PC-9 (cell line): ENCODE measurements at regions of chr1 and their contacts with region 1.

Region 1: DNA sequence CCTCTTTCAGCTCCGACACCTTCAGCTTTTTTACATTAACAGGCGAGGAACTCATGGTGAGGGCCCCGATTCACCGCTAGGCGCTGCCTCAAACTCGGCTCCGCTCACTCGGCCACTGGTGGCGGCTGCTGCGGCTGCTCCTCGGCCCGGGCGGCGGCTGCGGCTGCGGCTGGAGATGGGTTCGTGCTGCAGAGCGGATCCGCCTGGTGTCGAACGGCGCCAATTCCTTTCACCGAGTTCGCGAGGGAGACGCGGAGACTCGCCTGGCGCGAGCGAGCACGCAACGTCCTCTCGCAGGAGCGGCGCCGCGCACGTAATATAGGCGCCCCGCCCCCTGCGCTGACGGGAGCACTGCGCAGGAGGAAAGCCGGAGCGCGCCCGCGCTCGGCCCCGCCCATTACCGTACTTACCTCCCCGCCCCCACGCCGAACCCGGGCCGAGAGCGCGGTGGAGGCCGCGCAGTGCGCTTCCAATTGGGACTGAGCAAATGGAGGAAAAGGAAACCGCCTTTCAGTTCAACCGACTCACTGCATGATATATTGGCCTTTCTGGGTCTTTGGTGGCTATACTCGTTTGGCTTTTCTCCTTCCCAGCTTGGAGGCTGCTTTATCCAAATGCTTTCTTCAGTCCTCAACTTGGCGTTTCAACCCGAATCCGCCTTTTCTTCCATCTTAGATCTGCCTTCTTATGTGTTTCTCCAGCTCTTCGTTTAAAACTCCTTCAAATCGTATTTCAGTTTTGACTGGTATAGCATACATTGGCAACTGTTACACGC is at the start of gene HNRNPU:
- DNase-seq: peak; percentile 84 to 97
- H3K4me3 ChIP-seq: peak within 1 kb of the TSS; percentile 98
- H3K27ac ChIP-seq: peak within 1 kb of the TSS; percentile 70
- H3K4me1 ChIP-seq: peaks cover 31% of the 10 kb centered on the region
- H3K27me3 ChIP-seq: no peaks in the 10 kb centered on the region
- CTCF ChIP-seq: peak; percentile 47; the same call in 1 of the 2 replicates
- total RNA-seq, gene HNRNPU: 291 and 376 TPM in 2 replicates

Region 2: GRCh38 chr1:244329591-244330317 is 534.7 kb before region 1 on chr1:
- CTCF ChIA-PET with region 1: no interaction called
- POLR2A ChIA-PET with region 1: no interaction called
- intact Hi-C with region 1: no loop called
- DNase-seq: peak in 1 of 2 experiments; percentile 37
- H3K4me3 ChIP-seq: no peak overlapping the region
- H3K27ac ChIP-seq: no peak overlapping the region
- H3K4me1 ChIP-seq: peaks cover 25% of the 10 kb centered on the region
- H3K27me3 ChIP-seq: no peaks in the 10 kb centered on the region
- CTCF ChIP-seq: no peak

Region 3: GRCh38 chr1:244896550-244896949 is 32.1 kb after region 1 on chr1:
- CTCF ChIA-PET with region 1: interaction called, 12 read pairs
- POLR2A ChIA-PET with region 1: no interaction called
- intact Hi-C with region 1: no loop called
- DNase-seq: no peak
- H3K4me3 ChIP-seq: no peak overlapping the region
- H3K27ac ChIP-seq: no peak overlapping the region
- H3K4me1 ChIP-seq: no peaks in the 10 kb centered on the region
- H3K27me3 ChIP-seq: no peaks in the 10 kb centered on the region
- CTCF ChIP-seq: no peak

Region 4: GRCh38 chr1:244914761-244915160 is 50.3 kb after region 1 on chr1:
- CTCF ChIA-PET with region 1: no interaction called
- POLR2A ChIA-PET with region 1: no interaction called
- intact Hi-C with region 1: no loop called
- DNase-seq: no peak
- H3K4me3 ChIP-seq: no peak overlapping the region
- H3K27ac ChIP-seq: no peak overlapping the region
- H3K4me1 ChIP-seq: no peaks in the 10 kb centered on the region
- H3K27me3 ChIP-seq: 0 out of 2 replicates have a peak, but pooled peaks cover 5% of the 10 kb centered on the region
- CTCF ChIP-seq: no peak

Region 5: GRCh38 chr1:244970661-244971551 is 106.5 kb after region 1 on chr1:
- CTCF ChIA-PET with region 1: interaction called, 8 read pairs
- POLR2A ChIA-PET with region 1: interaction called, 40 read pairs
- intact Hi-C with region 1: loop called (anchors 1 kb)
- DNase-seq: peak; percentile 80 to 93
- H3K4me3 ChIP-seq: peak overlapping the region; percentile 65
- H3K27ac ChIP-seq: peak overlapping the region; percentile 97
- H3K4me1 ChIP-seq: peaks cover 25% of the 10 kb centered on the region
- H3K27me3 ChIP-seq: no peaks in the 10 kb centered on the region
- CTCF ChIP-seq: peak; percentile 65; the same call in 1 of the 2 replicates